Gastrocnemius medialis (tissue), 4 donors: ENCODE measurements at regions of chr7 and their contacts with region 1.

Region 1: DNA sequence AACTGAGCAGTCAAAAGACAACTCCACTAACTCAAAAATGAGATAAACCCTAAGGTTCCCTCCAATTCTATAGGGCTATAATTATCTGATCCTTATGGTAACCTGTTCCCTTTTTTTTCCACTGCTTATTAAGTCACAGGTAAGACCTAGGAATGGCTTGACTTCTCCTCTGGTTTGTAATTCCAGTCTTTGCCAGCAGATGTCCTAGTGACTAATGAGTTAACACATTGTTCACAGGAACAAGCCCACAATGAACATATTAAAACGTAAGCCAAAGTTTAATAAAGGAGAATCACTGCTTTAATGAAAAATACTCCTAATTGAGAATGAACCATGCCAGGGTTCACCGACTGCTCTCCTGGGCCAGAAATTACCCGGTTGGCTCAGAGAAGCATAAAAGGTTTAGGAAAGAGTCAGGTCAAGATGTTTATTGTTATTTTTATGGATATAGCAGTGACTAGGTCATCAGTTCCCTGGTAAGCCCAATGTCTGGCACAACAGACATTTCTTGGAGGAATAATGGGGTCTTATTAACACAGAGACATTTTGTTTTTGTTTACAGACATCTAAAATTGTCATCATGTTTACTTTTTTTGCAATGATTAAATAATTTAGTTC is 120.1 kb downstream of the ELAPOR2 start:
- DNase-seq: no peak
- ATAC-seq: peak; percentile 78
- H3K4me3 ChIP-seq: no peak overlapping the region
- H3K27ac ChIP-seq: no peak overlapping the region
- H3K4me1 ChIP-seq: peaks cover 0 to 4% of the 10 kb centered on the region in 2 donors
- H3K27me3 ChIP-seq: no peaks in the 10 kb centered on the region
- CTCF ChIP-seq: peak; percentile 50 to 77 (median 66)
- POLR2A ChIP-seq: no peak

Region 2: DNA sequence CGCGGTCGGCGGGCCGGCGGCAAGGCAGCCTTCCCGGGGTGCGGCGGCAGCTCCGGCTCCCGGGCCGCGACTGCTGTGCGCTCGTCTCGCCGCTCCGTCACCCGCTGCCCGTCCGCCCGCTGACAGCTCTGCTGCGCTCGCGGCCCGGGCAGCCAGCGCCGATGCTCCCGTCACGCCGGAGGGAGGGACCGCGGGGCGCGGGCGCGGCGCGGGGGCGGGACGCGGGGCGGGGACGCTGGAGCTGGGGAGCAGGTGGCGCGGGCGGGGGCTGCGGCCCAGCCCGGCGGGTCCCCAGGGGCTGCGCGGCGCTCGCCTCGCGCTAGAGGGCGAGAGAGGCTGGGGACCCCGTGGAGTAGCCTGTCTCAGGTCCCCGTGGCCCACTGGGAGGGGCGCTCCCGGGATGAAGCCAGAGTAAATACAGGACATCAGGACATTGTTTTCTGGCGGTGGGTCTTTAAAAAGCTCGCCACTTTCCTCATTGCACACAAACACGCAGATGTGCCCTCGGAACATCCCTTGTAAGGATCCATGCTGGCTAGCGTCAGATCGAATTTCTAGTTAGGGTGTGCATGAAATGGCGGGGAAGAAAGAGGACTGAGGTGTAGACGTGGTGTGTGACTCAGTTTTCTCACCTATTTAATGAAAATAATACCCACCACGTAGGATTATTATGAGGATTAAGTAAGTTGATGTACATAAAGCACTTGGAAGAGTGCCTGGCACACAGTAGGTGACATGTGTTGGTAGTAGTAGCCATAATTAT is 120.4 kb after region 1 on chr7 and contains the start of gene ELAPOR2:
- in situ Hi-C with region 1: loop called in 1 of 4 experiments (anchors 10 kb)
- intact Hi-C with region 1: loop called (anchors 5 kb)
- DNase-seq: peak; percentile 27 to 54
- ATAC-seq: peak; percentile 83 to 89
- H3K4me3 ChIP-seq: peak within 1 kb of the TSS; percentile 44 to 74 (median 65)
- H3K27ac ChIP-seq: peak within 1 kb of the TSS; percentile 58 to 72 (median 64)
- H3K4me1 ChIP-seq: peaks cover 9 to 10% of the 10 kb centered on the region in 2 donors
- H3K27me3 ChIP-seq: peaks cover 0 to 3% (median 0%) of the 10 kb centered on the region in 3 donors
- CTCF ChIP-seq: peak; percentile 26 to 60 (median 50)
- POLR2A ChIP-seq: peak; percentile 51 to 65
- total RNA-seq, gene ELAPOR2: 2.3 to 10.5 (median 3.8) TPM

Region 3: GRCh38 chr7:87100326-87100725 is 161.0 kb after region 1 on chr7:
- in situ Hi-C with region 1: no loop called
- intact Hi-C with region 1: no loop called
- DNase-seq: no peak
- ATAC-seq: no peak
- H3K4me3 ChIP-seq: no peak overlapping the region
- H3K27ac ChIP-seq: no peak overlapping the region
- H3K4me1 ChIP-seq: no peaks in the 10 kb centered on the region
- H3K27me3 ChIP-seq: no peaks in the 10 kb centered on the region
- CTCF ChIP-seq: no peak
- POLR2A ChIP-seq: no peak

Region 4: DNA sequence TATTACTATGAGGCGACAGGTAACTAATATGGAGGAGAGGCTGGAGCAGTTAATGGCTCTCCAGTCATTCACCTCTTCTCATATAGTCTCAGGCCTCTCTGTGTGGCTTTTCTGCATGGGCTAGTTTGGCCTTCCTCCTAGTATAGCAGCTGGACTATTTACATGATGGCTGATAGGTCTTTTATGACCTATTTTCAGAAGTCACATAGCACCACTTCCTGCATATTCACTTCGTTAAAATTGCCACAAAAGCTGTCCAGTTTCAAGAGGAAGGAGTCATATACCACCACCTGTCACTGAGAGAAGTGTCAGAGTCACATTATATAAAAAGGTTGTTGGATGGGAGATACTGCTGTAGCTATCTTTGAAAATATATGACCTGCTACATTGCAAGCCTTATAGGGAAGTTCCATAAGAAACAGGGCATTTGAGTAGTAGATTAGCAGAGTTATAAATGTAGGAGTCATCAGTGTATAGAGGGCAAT is 204.9 kb after region 1 on chr7:
- in situ Hi-C with region 1: loop called (anchors 5 to 10 kb)
- intact Hi-C with region 1: loop called (anchors 1 kb)
- DNase-seq: no peak
- ATAC-seq: no peak
- H3K4me3 ChIP-seq: no peak overlapping the region
- H3K27ac ChIP-seq: no peak overlapping the region
- H3K4me1 ChIP-seq: peaks cover 0 to 7% of the 10 kb centered on the region in 2 donors
- H3K27me3 ChIP-seq: no peaks in the 10 kb centered on the region
- CTCF ChIP-seq: no peak
- POLR2A ChIP-seq: no peak

Region 5: GRCh38 chr7:87173471-87173870 is 234.2 kb after region 1 on chr7:
- in situ Hi-C with region 1: no loop called
- intact Hi-C with region 1: no loop called
- DNase-seq: no peak
- ATAC-seq: no peak
- H3K4me3 ChIP-seq: no peak overlapping the region
- H3K27ac ChIP-seq: no peak overlapping the region
- H3K4me1 ChIP-seq: no peaks in the 10 kb centered on the region
- H3K27me3 ChIP-seq: no peaks in the 10 kb centered on the region
- CTCF ChIP-seq: no peak
- POLR2A ChIP-seq: no peak

Region 6: GRCh38 chr7:87225696-87226095 is 286.4 kb after region 1 on chr7:
- in situ Hi-C with region 1: loop called in 2 of 4 experiments (anchors 5 to 25 kb)
- intact Hi-C with region 1: no loop called
- DNase-seq: no peak
- ATAC-seq: no peak
- H3K4me3 ChIP-seq: no peak overlapping the region
- H3K27ac ChIP-seq: no peak overlapping the region
- H3K4me1 ChIP-seq: peaks cover 5 to 7% of the 10 kb centered on the region in 2 donors
- H3K27me3 ChIP-seq: no peaks in the 10 kb centered on the region
- CTCF ChIP-seq: no peak
- POLR2A ChIP-seq: no peak

Region 7: DNA sequence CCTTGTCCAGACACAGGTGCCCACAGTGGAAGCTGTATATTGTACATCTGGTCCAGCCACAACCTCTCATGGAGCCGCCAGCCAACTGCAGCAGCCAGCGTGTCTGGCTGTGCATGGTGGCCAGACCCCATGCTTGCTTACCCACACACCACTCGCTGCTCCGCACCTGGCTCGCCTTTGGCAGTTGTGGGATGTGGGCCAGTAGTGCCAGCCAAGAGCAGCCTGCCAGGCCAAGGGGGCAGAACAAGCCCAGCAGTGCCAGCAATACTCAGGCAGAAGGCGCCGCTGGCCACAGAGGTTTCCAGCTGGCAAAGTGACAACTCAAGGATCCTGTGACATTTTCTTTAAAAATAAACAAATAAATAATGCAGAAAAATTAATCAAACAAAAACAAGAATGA is 291.9 kb after region 1 on chr7:
- in situ Hi-C with region 1: loop called in 2 of 4 experiments (anchors 5 to 25 kb)
- intact Hi-C with region 1: no loop called
- DNase-seq: no peak
- ATAC-seq: no peak
- H3K4me3 ChIP-seq: no peak overlapping the region
- H3K27ac ChIP-seq: no peak overlapping the region
- H3K4me1 ChIP-seq: peaks cover 4 to 7% of the 10 kb centered on the region in 2 donors
- H3K27me3 ChIP-seq: no peaks in the 10 kb centered on the region
- CTCF ChIP-seq: no peak
- POLR2A ChIP-seq: no peak

Region 8: GRCh38 chr7:87416682-87417587 is 477.6 kb after region 1 on chr7:
- in situ Hi-C with region 1: loop called in 2 of 4 experiments (anchors 25 kb)
- intact Hi-C with region 1: no loop called
- DNase-seq: peak; percentile 18 to 32
- ATAC-seq: peak; percentile 45 to 53
- H3K4me3 ChIP-seq: no peak overlapping the region
- H3K27ac ChIP-seq: no peak overlapping the region
- H3K4me1 ChIP-seq: peaks cover 13 to 14% of the 10 kb centered on the region in 2 donors
- H3K27me3 ChIP-seq: no peaks in the 10 kb centered on the region
- CTCF ChIP-seq: peak; percentile 60 to 69 (median 64)
- POLR2A ChIP-seq: no peak